Right lobe of liver (tissue), 6 donors: ENCODE measurements at regions of chr1 and their contacts with region 1.

Region 1: GRCh38 chr1:19651141-19651737 is 7.1 kb downstream of the NBL1 start:
- DNase-seq: peak in 1 of 3 donors; percentile 60
- ATAC-seq: peak; percentile 85 to 89 (median 86)
- H3K4me3 ChIP-seq: no peak overlapping the region
- H3K27ac ChIP-seq: peak overlapping the region in 1 of 3 donors; percentile 54
- H3K4me1 ChIP-seq: peaks cover 0 to 3% (median 0%) of the 10 kb centered on the region in 4 donors
- H3K27me3 ChIP-seq: no peaks in the 10 kb centered on the region
- CTCF ChIP-seq: peak; percentile 62 to 76 (median 68)
- POLR2A ChIP-seq: no peak

Region 2: DNA sequence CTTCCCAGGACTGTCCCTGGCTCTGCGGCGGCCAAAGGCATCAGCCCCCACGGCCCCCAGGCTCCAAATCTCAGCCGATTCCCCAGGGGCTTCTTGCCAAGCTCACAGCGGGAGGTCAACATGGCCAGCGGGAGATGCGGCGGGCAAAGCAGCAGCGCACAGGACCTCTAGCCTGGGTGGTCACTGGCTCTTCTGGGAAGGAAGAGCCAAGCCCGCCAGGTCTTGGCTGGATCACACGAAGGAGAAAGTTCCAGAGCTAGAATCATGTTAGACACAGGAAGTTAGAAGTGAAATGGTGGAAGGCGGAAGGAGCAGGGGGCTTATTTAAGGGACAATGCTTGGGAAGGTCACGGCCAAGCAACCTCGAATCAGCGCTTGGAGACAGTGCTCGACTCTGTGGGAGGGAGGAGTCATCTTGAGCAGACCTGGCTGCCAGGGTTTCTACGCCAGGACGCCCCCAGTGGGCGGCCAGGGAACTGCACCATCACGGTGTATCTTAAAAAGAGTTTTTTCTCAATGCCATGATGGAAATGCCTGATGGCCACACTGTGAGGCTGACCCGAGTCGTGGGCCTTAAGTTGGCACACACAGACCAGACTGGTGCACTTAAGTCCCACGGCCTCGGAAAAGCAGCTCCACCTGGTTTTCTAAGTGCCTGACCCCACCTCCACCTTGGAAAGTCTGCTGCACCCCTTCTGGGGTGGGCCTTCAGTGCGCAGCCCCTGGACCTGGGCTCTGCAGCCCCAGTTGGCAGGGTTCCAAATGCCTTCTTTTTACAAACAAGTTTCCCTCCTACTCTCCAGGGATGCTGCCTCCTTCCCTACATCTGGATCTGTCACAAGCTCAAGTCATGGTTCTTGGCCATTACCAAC is 309.8 kb before region 1 on chr1:
- intact Hi-C with region 1: loop called (anchors 10 kb)
- DNase-seq: peak in 1 of 3 donors; percentile 67
- ATAC-seq: peak; percentile 3 to 31 (median 20)
- H3K4me3 ChIP-seq: no peak overlapping the region
- H3K27ac ChIP-seq: no peak overlapping the region
- H3K4me1 ChIP-seq: peaks cover 0 to 14% (median 6%) of the 10 kb centered on the region in 4 donors
- H3K27me3 ChIP-seq: no peaks in the 10 kb centered on the region
- CTCF ChIP-seq: peak; percentile 72 to 84 (median 81)
- POLR2A ChIP-seq: no peak

Region 3: GRCh38 chr1:19384113-19384512 is 267.1 kb before region 1 on chr1:
- intact Hi-C with region 1: loop called (anchors 5 to 10 kb)
- DNase-seq: peak in 1 of 3 donors; percentile 47
- ATAC-seq: peak in 1 of 4 donors; percentile 14
- H3K4me3 ChIP-seq: no peak overlapping the region
- H3K27ac ChIP-seq: no peak overlapping the region
- H3K4me1 ChIP-seq: peaks cover 0 to 23% (median 8%) of the 10 kb centered on the region in 4 donors
- H3K27me3 ChIP-seq: no peaks in the 10 kb centered on the region
- CTCF ChIP-seq: no peak
- POLR2A ChIP-seq: no peak

Region 4: GRCh38 chr1:19468397-19468956 is 182.8 kb before region 1 on chr1:
- intact Hi-C with region 1: no loop called
- DNase-seq: peak in 1 of 3 donors; percentile 62
- ATAC-seq: peak; percentile 49 to 68 (median 62)
- H3K4me3 ChIP-seq: no peak overlapping the region
- H3K27ac ChIP-seq: peak overlapping the region; percentile 7 to 91 (median 23)
- H3K4me1 ChIP-seq: peaks cover 0 to 38% (median 22%) of the 10 kb centered on the region in 4 donors
- H3K27me3 ChIP-seq: no peaks in the 10 kb centered on the region
- CTCF ChIP-seq: no peak
- POLR2A ChIP-seq: no peak

Region 5: GRCh38 chr1:19596714-19597495 is 54.3 kb before region 1 on chr1:
- intact Hi-C with region 1: no loop called
- DNase-seq: peak; percentile 95 to 97 (median 97)
- ATAC-seq: peak; percentile 93 to 96 (median 96)
- H3K4me3 ChIP-seq: peak overlapping the region; percentile 79 to 92 (median 92)
- H3K27ac ChIP-seq: peak overlapping the region; percentile 66 to 88 (median 80)
- H3K4me1 ChIP-seq: peaks cover 0 to 15% (median 4%) of the 10 kb centered on the region in 4 donors
- H3K27me3 ChIP-seq: no peaks in the 10 kb centered on the region
- CTCF ChIP-seq: no peak
- POLR2A ChIP-seq: peak; percentile 80